ENCODE measurements at regions of chr13 and their contacts with region 1.

Region 1: DNA sequence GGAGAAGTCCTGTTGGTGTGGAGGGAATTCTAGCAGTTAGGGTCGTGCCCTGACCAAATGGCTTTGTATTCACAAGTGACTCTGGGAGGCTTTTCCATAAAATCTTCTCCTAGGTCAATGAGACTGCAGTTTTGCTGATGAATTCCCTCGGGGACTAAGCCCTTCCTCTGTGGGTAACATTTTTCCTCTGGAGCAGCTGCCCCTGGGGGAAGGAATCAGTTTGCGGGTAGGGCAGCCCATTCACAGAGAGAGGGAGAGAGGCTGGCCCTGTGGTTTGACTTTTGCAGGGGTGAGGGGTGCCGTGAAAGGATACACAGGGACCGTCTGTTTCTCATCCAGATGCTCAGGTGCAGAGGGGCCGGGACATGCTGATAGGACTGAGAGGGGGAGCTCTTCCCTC is 67.3 kb downstream of the ERICH6B start:
- DNase-seq: no peak
- H3K4me3 ChIP-seq: no peak overlapping the region
- H3K27ac ChIP-seq: no peak overlapping the region
- H3K4me1 ChIP-seq: no peaks in the 10 kb centered on the region
- H3K27me3 ChIP-seq: peaks cover 2% of the 10 kb centered on the region
- CTCF ChIP-seq: no peak
- POLR2A ChIP-seq: no peak

Region 2: GRCh38 chr13:45575146-45575829 is 27.0 kb after region 1 on chr13:
- intact Hi-C with region 1: loop called (anchors 2 kb)
- DNase-seq: no peak
- H3K4me3 ChIP-seq: no peak overlapping the region
- H3K27ac ChIP-seq: no peak overlapping the region
- H3K4me1 ChIP-seq: no peaks in the 10 kb centered on the region
- H3K27me3 ChIP-seq: no peaks in the 10 kb centered on the region
- CTCF ChIP-seq: no peak
- POLR2A ChIP-seq: no peak